CD8-positive, alpha-beta memory T cell (primary cell): ENCODE measurements at regions of chr2 and their contacts with region 1.

Region 1: DNA sequence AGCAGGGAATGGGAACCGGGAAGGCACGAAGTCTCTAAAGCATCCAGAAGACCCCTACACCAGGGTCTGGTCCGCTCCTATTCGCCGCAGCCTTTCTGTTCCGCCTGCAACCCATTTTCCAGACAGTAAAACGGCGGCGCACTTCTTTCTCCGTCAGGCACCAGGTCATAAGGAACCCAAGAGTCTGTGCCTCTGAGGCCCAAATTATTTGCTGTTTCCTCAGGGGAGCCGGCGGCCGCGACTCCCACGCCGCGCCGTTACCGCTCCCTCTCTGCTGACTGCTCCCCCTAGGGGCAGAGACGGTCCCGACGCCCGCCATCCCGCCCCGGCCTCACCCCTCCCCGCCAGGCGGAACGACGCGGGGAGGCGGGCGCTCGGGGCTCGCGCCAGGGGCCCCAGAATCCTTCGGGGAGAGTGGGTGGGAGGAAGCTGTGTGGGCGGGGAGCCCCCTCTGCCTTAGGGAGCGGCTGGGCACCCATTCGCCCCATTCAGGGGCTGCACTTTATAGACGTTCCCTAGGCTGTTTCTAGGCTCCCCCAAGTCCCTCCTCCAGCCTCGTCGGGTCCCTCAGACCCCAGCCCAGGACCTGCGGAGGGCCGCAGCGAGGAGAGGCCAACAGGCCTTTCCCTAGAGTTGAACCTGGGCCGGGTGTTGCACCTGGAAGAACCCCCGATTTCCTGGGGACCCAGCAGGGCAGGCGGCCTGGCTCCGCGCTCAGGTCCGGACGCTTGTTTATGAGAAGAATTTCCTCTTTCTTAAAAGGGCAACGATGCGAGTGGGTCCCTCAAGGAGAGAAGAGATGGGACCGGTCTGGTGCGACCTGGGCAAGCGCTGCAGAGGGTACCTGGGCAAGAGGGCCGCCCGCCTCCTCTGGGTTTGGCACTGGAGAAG is 3.6 kb upstream of the CTDSP1 start:
- DNase-seq: peak; percentile 90 to 96 (median 95)
- H3K4me3 ChIP-seq: peak overlapping the region; percentile 93
- H3K4me3 Mint-ChIP-seq: peak overlapping the region; percentile 90 to 98 (median 93)
- H3K27ac ChIP-seq: peak overlapping the region; percentile 92
- H3K27ac Mint-ChIP-seq: peak overlapping the region; percentile 91 to 100 (median 98)
- H3K4me1 ChIP-seq: peaks cover 45% of the 10 kb centered on the region
- H3K4me1 Mint-ChIP-seq: peaks cover 42 to 56% (median 46%) of the 10 kb centered on the region in 3 donors
- H3K27me3 ChIP-seq: no peaks in the 10 kb centered on the region
- H3K27me3 Mint-ChIP-seq: peaks cover 0 to 13% of the 10 kb centered on the region in 2 donors

Region 2: GRCh38 chr2:218286570-218287459 is 109.2 kb before region 1 on chr2:
- CTCF ChIA-PET with region 1: interaction called, 55 read pairs
- POLR2A ChIA-PET with region 1: interaction called, 10 read pairs
- DNase-seq: peak; percentile 79 to 89 (median 86)
- H3K4me3 ChIP-seq: peak overlapping the region; percentile 60
- H3K4me3 Mint-ChIP-seq: peak overlapping the region; percentile 76 to 93 (median 89)
- H3K27ac ChIP-seq: peak overlapping the region; percentile 96
- H3K27ac Mint-ChIP-seq: peak overlapping the region; percentile 97 to 100 (median 99)
- H3K4me1 ChIP-seq: peaks cover 85% of the 10 kb centered on the region
- H3K4me1 Mint-ChIP-seq: peaks cover 78 to 91% (median 82%) of the 10 kb centered on the region in 3 donors
- H3K27me3 ChIP-seq: no peaks in the 10 kb centered on the region
- H3K27me3 Mint-ChIP-seq: no peaks in the 10 kb centered on the region

Region 3: GRCh38 chr2:218292048-218293014 is 103.7 kb before region 1 on chr2 and contains the start of gene TMBIM1:
- CTCF ChIA-PET with region 1: interaction called, 55 read pairs
- POLR2A ChIA-PET with region 1: interaction called, 10 read pairs
- DNase-seq: peak; percentile 76 to 84 (median 79)
- H3K4me3 ChIP-seq: peak within 1 kb of the TSS; percentile 83
- H3K4me3 Mint-ChIP-seq: peak within 1 kb of the TSS; percentile 88 to 94 (median 92)
- H3K27ac ChIP-seq: peak within 1 kb of the TSS; percentile 84
- H3K27ac Mint-ChIP-seq: peak within 1 kb of the TSS; percentile 88 to 99 (median 98)
- H3K4me1 ChIP-seq: peaks cover 58% of the 10 kb centered on the region
- H3K4me1 Mint-ChIP-seq: peaks cover 46 to 66% (median 58%) of the 10 kb centered on the region in 3 donors
- H3K27me3 ChIP-seq: no peaks in the 10 kb centered on the region
- H3K27me3 Mint-ChIP-seq: no peaks in the 10 kb centered on the region
- total RNA-seq, gene TMBIM1: 82.3 to 92.3 TPM

Region 4: GRCh38 chr2:218301176-218301819 is 94.7 kb before region 1 on chr2:
- CTCF ChIA-PET with region 1: interaction called, 55 read pairs
- POLR2A ChIA-PET with region 1: interaction called, 3 read pairs
- DNase-seq: peak; percentile 77 to 91 (median 80)
- H3K4me3 ChIP-seq: no peak overlapping the region
- H3K4me3 Mint-ChIP-seq: peak overlapping the region in 1 of 7 donors; percentile 11
- H3K27ac ChIP-seq: no peak overlapping the region
- H3K27ac Mint-ChIP-seq: peak overlapping the region in 6 of 8 donors; percentile 1 to 70 (median 28)
- H3K4me1 ChIP-seq: peaks cover 6% of the 10 kb centered on the region
- H3K4me1 Mint-ChIP-seq: peaks cover 3 to 8% (median 7%) of the 10 kb centered on the region in 3 donors
- H3K27me3 ChIP-seq: no peaks in the 10 kb centered on the region
- H3K27me3 Mint-ChIP-seq: no peaks in the 10 kb centered on the region

Region 5: DNA sequence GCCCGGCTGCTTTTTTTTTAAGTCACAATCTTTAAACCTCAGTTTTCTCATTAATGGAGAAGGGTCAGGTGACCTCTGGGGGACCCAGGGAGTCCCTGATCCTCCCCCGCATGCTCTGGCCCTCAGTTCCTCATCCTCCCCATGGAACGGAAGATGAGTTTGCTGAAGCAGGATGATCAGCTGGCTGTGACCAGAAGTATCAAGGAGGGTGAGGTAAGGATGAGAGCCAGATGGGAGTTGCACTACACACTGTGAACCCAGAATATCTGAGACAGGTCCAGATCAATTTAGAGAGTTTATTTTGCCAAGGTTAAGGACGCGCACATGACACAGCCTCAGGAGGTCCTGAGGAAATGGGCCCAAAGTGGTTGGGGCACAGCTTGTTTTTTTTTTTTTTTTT is 35.6 kb before region 1 on chr2:
- CTCF ChIA-PET with region 1: interaction called, 14 read pairs
- POLR2A ChIA-PET with region 1: no interaction called
- DNase-seq: no peak
- H3K4me3 ChIP-seq: no peak overlapping the region
- H3K4me3 Mint-ChIP-seq: no peak overlapping the region
- H3K27ac ChIP-seq: no peak overlapping the region
- H3K27ac Mint-ChIP-seq: no peak overlapping the region
- H3K4me1 ChIP-seq: no peaks in the 10 kb centered on the region
- H3K4me1 Mint-ChIP-seq: peaks cover 0 to 4% (median 2%) of the 10 kb centered on the region in 3 donors
- H3K27me3 ChIP-seq: no peaks in the 10 kb centered on the region
- H3K27me3 Mint-ChIP-seq: no peaks in the 10 kb centered on the region

Region 6: DNA sequence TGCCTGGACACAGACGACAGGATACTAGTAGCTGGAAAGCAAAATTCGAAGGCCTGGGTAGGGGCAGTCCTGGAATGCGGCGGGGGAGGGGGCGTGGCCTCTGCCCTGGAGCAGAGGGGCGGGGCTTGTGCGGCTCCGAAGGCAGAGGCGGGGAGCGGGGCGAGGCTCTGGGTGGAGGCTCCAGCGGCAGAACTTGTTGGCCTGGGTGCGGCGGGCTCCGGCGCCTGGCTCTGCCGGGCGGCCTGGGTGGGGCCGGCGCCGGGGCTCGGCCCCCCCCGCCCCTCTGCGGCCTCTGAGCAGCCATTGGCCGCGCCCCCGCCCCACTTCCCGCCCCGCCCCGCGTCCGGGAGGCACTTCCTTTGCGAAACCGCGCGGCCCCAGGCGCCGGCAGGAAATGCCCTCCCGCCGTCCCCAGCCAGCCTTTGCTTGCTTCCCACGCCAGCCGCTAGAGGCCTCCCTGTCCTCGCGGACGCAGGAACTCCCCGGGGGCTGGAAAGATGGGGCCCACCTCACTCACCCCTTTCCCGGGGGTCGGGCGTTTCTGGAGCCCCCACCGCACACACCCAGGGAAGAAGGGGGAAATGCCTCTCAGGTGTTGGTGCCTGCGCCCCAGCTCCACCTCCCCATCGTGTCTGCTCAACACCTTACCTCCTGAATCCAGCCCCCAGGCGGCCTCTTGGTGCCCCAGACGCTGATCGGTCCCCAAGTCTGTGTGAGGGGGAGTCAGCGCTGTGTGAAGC is 10.3 kb after region 1 on chr2:
- CTCF ChIA-PET with region 1: interaction called, 20 read pairs
- POLR2A ChIA-PET with region 1: interaction called, 20 read pairs
- DNase-seq: peak; percentile 88 to 95 (median 92)
- H3K4me3 ChIP-seq: peak overlapping the region; percentile 65
- H3K4me3 Mint-ChIP-seq: peak overlapping the region; percentile 82 to 93 (median 83)
- H3K27ac ChIP-seq: peak overlapping the region; percentile 70
- H3K27ac Mint-ChIP-seq: peak overlapping the region; percentile 83 to 99 (median 97)
- H3K4me1 ChIP-seq: peaks cover 35% of the 10 kb centered on the region
- H3K4me1 Mint-ChIP-seq: peaks cover 45 to 65% (median 47%) of the 10 kb centered on the region in 3 donors
- H3K27me3 ChIP-seq: no peaks in the 10 kb centered on the region
- H3K27me3 Mint-ChIP-seq: no peaks in the 10 kb centered on the region

Region 7: GRCh38 chr2:218419630-218420216 is 23.7 kb after region 1 on chr2:
- CTCF ChIA-PET with region 1: no interaction called
- POLR2A ChIA-PET with region 1: no interaction called
- DNase-seq: no peak
- H3K4me3 ChIP-seq: no peak overlapping the region
- H3K4me3 Mint-ChIP-seq: no peak overlapping the region
- H3K27ac ChIP-seq: no peak overlapping the region
- H3K27ac Mint-ChIP-seq: no peak overlapping the region
- H3K4me1 ChIP-seq: no peaks in the 10 kb centered on the region
- H3K4me1 Mint-ChIP-seq: peaks cover 0 to 2% (median 0%) of the 10 kb centered on the region in 3 donors
- H3K27me3 ChIP-seq: no peaks in the 10 kb centered on the region
- H3K27me3 Mint-ChIP-seq: peaks cover 0 to 4% of the 10 kb centered on the region in 2 donors